CD8-positive, alpha-beta T cell (primary cell): ENCODE measurements at regions of chrX and their contacts with region 1.

Region 1: GRCh38 chrX:2690856-2691542 is at the start of gene CD99:
- DNase-seq: peak; percentile 83 to 96 (median 89)
- ATAC-seq: peak; percentile 93
- H3K4me3 ChIP-seq: peak within 1 kb of the TSS; percentile 80 to 91
- H3K4me3 Mint-ChIP-seq: peak within 1 kb of the TSS; percentile 94
- H3K27ac ChIP-seq: peak within 1 kb of the TSS; percentile 70 to 71
- H3K27ac Mint-ChIP-seq: peak within 1 kb of the TSS; percentile 94
- H3K4me1 ChIP-seq: peaks cover 44% of the 10 kb centered on the region
- H3K4me1 Mint-ChIP-seq: peaks cover 37% of the 10 kb centered on the region
- H3K27me3 ChIP-seq: no peaks in the 10 kb centered on the region
- H3K27me3 Mint-ChIP-seq: no peaks in the 10 kb centered on the region
- CTCF ChIP-seq: no peak
- total RNA-seq, gene CD99: 114 to 120 TPM

Region 2: DNA sequence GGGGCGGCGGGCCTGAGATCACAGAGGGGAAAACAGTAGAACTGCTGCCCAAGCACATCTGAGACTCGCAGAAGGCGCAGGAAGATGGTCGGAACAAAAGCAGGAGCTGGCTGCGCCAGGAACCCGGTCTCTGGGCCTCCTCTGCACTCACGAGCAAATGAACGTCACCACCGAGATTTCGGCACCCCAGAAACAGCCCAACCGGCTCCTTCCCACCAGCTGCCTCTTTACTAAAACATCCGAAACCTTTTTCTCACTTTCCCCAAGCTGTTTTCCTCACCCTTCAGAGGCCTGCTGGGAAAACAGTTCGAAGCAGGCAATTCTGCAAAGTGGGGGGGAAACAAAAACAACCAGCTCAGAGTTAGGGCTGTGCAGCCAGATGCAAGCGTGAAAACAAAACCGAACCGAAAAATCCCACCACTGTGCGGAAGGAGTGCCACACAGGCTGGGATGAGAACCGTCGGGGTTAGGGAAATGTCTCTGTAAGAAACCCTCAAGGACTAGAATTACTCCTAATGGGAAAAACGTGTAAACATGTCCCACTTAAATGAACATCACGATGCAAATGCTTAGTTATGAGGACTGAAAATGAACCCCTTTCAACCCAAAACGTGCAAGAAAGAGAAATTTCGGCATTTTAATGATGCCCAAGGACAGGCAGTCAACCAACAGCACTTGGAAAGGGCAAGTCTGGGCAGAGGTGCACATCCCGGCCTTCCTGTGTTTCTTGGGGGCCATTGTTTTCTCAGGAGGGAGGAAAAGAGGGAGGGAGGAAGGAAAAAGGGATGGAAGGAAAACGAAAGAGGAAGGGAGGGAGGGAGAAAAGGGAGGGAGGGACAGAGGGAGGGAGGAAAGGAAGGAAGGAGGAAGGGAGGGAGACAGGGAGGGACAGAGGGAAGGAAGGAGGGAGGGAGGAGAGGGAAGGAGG is 206.0 kb before region 1 on chrX:
- CTCF ChIA-PET with region 1: no interaction called
- POLR2A ChIA-PET with region 1: no interaction called
- intact Hi-C with region 1: no loop called
- DNase-seq: no peak
- ATAC-seq: no peak
- H3K4me3 ChIP-seq: no peak overlapping the region
- H3K4me3 Mint-ChIP-seq: no peak overlapping the region
- H3K27ac ChIP-seq: no peak overlapping the region
- H3K27ac Mint-ChIP-seq: peak overlapping the region; percentile 52
- H3K4me1 ChIP-seq: no peaks in the 10 kb centered on the region
- H3K4me1 Mint-ChIP-seq: no peaks in the 10 kb centered on the region
- H3K27me3 ChIP-seq: no peaks in the 10 kb centered on the region
- H3K27me3 Mint-ChIP-seq: no peaks in the 10 kb centered on the region
- CTCF ChIP-seq: no peak

Region 3: DNA sequence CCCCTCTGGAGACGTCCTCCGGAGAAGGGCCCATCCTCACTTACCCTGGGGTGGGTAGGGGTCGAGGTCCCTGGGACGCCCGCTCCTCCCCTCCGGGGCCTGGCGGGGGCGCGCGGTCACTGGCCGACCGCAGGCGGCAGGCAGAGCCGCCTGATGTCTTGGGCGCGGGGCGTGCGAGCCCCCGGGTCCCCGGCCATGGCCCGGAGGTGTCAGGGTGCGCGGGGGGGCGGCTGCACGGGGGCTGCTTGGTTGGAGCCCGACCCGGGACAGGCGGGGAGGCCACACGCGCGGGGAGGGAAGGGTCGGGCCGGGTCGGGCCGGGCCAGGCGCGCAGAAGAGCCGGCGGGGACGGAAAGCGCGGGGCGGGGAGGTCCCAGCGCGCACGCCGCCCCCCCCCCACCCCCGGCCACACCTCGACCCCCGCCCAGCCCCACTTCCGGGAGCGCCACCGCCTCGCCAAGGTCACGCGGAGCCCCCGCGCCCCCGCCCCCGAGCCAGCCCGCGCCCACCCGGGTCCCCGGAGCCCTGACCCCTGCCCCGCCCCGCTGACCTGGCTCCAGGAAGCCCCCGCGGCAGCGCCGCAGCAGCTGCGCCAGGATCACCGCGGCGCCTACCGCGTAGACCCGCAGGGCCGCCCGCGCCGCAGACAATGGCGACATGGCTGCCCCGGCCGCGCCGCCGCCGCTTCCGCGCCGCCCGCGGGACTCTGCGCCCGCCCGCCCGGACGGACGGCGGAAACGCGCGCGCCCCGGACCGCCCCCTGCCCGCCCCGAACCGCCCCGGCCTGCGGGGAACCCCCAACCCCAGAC is 190.5 kb before region 1 on chrX and contains the starts of genes DHRSX and ZBED1:
- CTCF ChIA-PET with region 1: no interaction called
- POLR2A ChIA-PET with region 1: no interaction called
- intact Hi-C with region 1: loop called in 1 of 2 experiments (anchors 2 kb)
- DNase-seq: peak in 8 of 9 experiments; percentile 29 to 72 (median 48)
- ATAC-seq: peak; percentile 64
- H3K4me3 ChIP-seq: peak within 1 kb of the TSS; percentile 66 to 67
- H3K4me3 Mint-ChIP-seq: peak within 1 kb of the TSS; percentile 88
- H3K27ac ChIP-seq: peak within 1 kb of the TSS; percentile 68 to 76
- H3K27ac Mint-ChIP-seq: peak within 1 kb of the TSS; percentile 93
- H3K4me1 ChIP-seq: peaks cover 12% of the 10 kb centered on the region
- H3K4me1 Mint-ChIP-seq: peaks cover 35% of the 10 kb centered on the region
- H3K27me3 ChIP-seq: no peaks in the 10 kb centered on the region
- H3K27me3 Mint-ChIP-seq: no peaks in the 10 kb centered on the region
- CTCF ChIP-seq: no peak
- total RNA-seq, gene DHRSX: 9.9 to 10.8 TPM
- total RNA-seq, gene ZBED1: 13.4 to 14.8 TPM

Region 4: DNA sequence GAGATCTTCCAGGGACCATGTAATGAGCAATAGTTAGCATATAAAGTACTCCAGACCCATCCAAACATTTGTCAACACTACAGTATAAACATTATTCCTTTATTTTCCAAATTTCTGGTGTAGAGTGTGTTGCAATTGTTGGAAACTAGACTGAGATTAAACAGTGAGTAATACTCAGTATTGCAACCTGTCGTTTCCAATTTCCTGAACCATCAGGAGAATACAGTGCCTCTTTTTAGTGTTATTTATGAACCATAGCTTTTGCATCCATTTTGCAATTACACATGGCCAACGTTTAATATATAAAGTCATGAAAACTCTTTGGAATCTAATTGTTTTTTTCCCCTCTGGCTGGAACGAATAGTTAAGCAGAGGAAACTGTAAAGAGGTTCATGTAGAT is 131.9 kb before region 1 on chrX:
- CTCF ChIA-PET with region 1: no interaction called
- POLR2A ChIA-PET with region 1: no interaction called
- intact Hi-C with region 1: no loop called
- DNase-seq: no peak
- ATAC-seq: no peak
- H3K4me3 ChIP-seq: no peak overlapping the region
- H3K4me3 Mint-ChIP-seq: no peak overlapping the region
- H3K27ac ChIP-seq: no peak overlapping the region
- H3K27ac Mint-ChIP-seq: no peak overlapping the region
- H3K4me1 ChIP-seq: no peaks in the 10 kb centered on the region
- H3K4me1 Mint-ChIP-seq: no peaks in the 10 kb centered on the region
- H3K27me3 ChIP-seq: peaks cover 0 to 3% of the 10 kb centered on the region in 2 experiments
- H3K27me3 Mint-ChIP-seq: peaks cover 29% of the 10 kb centered on the region
- CTCF ChIP-seq: no peak

Region 5: DNA sequence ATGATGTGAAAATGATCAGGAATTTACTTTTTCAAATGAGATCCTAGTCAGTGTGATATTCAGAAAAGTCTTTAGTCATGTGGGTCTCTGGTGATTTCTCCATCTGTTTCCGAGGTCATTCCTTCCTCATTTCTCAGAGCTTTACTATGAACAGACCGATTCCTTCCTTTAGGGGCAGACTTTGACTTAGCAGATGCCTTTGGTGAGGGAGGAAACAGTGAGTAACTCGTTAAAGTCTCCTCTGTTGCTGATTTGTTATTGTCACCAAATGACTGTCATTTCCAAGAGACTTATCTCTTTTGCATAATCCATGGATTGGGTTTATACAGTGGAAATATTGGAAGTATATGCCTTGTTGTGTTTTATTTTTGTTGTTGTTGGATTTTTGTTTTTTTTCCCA is 76.1 kb before region 1 on chrX:
- CTCF ChIA-PET with region 1: no interaction called
- POLR2A ChIA-PET with region 1: no interaction called
- intact Hi-C with region 1: loop called in 1 of 2 experiments (anchors 5 kb)
- DNase-seq: peak in 1 of 9 experiments; percentile 27
- ATAC-seq: no peak
- H3K4me3 ChIP-seq: no peak overlapping the region
- H3K4me3 Mint-ChIP-seq: no peak overlapping the region
- H3K27ac ChIP-seq: no peak overlapping the region
- H3K27ac Mint-ChIP-seq: no peak overlapping the region
- H3K4me1 ChIP-seq: peaks cover 10% of the 10 kb centered on the region
- H3K4me1 Mint-ChIP-seq: peaks cover 27% of the 10 kb centered on the region
- H3K27me3 ChIP-seq: no peaks in the 10 kb centered on the region
- H3K27me3 Mint-ChIP-seq: no peaks in the 10 kb centered on the region
- CTCF ChIP-seq: no peak

Region 6: DNA sequence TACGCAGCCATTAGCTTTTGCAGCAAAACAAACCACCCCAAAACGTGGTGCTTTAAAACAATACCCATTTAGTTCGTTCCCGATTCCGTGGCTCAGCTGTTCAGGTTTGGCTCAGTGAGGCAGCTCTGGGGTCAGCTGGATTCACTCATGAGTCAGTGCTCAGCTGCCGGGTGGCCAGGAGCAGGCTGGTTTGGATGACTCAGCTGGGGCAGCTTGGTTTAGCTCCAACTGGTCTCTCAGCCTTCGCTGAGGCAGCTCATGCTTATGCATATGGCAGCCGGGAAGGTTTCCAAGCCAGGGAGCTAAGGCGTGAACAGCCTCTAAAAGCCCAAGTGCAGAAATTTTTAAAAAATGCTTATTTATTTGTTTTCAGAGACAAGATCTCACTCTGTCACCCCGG is 13.2 kb before region 1 on chrX:
- CTCF ChIA-PET with region 1: no interaction called
- POLR2A ChIA-PET with region 1: no interaction called
- intact Hi-C with region 1: no loop called
- DNase-seq: no peak
- ATAC-seq: no peak
- H3K4me3 ChIP-seq: no peak overlapping the region
- H3K4me3 Mint-ChIP-seq: no peak overlapping the region
- H3K27ac ChIP-seq: no peak overlapping the region
- H3K27ac Mint-ChIP-seq: no peak overlapping the region
- H3K4me1 ChIP-seq: no peaks in the 10 kb centered on the region
- H3K4me1 Mint-ChIP-seq: no peaks in the 10 kb centered on the region
- H3K27me3 ChIP-seq: no peaks in the 10 kb centered on the region
- H3K27me3 Mint-ChIP-seq: no peaks in the 10 kb centered on the region
- CTCF ChIP-seq: no peak

Region 7: GRCh38 chrX:2707334-2707760 is 16.3 kb after region 1 on chrX:
- CTCF ChIA-PET with region 1: no interaction called
- POLR2A ChIA-PET with region 1: no interaction called
- intact Hi-C with region 1: loop called (anchors 1 to 2 kb)
- DNase-seq: peak; percentile 13 to 80 (median 64)
- ATAC-seq: peak; percentile 50
- H3K4me3 ChIP-seq: peak overlapping the region in 1 of 2 experiments; percentile 16
- H3K4me3 Mint-ChIP-seq: peak overlapping the region; percentile 52
- H3K27ac ChIP-seq: peak overlapping the region in 1 of 2 experiments; percentile 31
- H3K27ac Mint-ChIP-seq: peak overlapping the region; percentile 84
- H3K4me1 ChIP-seq: peaks cover 76% of the 10 kb centered on the region
- H3K4me1 Mint-ChIP-seq: peaks cover 86% of the 10 kb centered on the region
- H3K27me3 ChIP-seq: no peaks in the 10 kb centered on the region
- H3K27me3 Mint-ChIP-seq: no peaks in the 10 kb centered on the region
- CTCF ChIP-seq: no peak